ENCODE measurements at regions of chr11 and their contacts with region 1.

Region 1: DNA sequence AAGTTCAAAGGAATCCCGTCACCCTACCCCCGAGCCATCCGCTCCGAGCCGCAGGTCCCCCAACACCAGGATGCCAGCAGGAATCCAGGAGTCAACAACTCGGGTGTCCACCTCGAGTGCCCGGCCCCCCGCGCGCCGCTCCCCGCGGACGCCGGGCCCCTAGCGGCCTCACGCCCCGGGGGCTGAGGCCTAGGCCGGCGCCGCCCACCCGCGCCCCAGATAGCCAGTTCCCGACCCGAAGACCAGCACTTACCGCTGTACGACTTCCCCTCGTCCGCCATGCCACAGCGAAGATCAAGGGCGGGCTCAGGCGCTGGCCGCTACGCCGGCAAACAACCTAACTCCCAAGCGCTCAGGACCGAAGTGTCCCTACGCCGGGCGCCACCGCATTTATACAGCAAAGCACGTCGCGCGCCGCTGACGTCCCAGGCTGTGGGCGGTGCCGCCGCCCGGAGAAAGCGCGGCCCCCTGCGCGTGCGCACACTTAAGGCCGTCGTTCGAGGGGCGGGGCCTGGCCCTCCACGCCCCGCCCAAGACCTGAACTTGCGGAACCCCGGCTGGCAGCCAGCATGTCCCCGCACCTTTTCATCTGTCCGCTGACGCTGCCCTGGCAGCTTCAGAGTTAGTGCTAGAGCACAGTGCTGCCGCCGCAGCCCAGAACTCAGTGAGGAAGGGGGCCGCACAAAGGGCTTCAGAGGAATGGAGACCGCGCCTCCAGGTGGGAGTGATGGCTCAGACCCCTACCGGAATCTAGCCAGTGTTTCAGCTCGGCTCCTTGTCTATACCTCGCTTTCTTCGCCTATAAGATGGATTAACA is at the start of gene NXF1:
- DNase-seq: peak; percentile 80
- ATAC-seq: peak; percentile 89
- H3K4me3 ChIP-seq: peak within 1 kb of the TSS; percentile 85
- H3K27ac ChIP-seq: peak within 1 kb of the TSS; percentile 86
- H3K4me1 ChIP-seq: peaks cover 16% of the 10 kb centered on the region
- H3K27me3 ChIP-seq: no peaks in the 10 kb centered on the region
- CTCF ChIP-seq: peak in 1 of 3 experiments; percentile 26; a peak in 1 of 6 replicates
- EP300 ChIP-seq: 0 out of 4 replicates have a peak, but pooled peaks of 1 of the 2 experiments have one; percentile 22
- POLR2A ChIP-seq: peak; percentile 100
- RAD21 ChIP-seq: no peak
- polyA plus RNA-seq, gene NXF1: 23.4 to 37.5 TPM

Region 2: GRCh38 chr11:62816557-62816956 is 11.3 kb after region 1 on chr11:
- CTCF ChIA-PET with region 1: interaction called, 3 read pairs
- POLR2A ChIA-PET with region 1: interaction called, 17 read pairs
- RAD21 ChIA-PET with region 1: no interaction called
- SMC1A ChIA-PET with region 1: interaction called, 10 read pairs
- in situ Hi-C with region 1: no loop called
- intact Hi-C with region 1: no loop called
- DNase-seq: no peak
- ATAC-seq: no peak
- H3K4me3 ChIP-seq: no peak overlapping the region
- H3K27ac ChIP-seq: no peak overlapping the region
- H3K4me1 ChIP-seq: no peaks in the 10 kb centered on the region
- H3K27me3 ChIP-seq: no peaks in the 10 kb centered on the region
- CTCF ChIP-seq: no peak
- EP300 ChIP-seq: no peak
- POLR2A ChIP-seq: no peak
- RAD21 ChIP-seq: no peak

Region 3: DNA sequence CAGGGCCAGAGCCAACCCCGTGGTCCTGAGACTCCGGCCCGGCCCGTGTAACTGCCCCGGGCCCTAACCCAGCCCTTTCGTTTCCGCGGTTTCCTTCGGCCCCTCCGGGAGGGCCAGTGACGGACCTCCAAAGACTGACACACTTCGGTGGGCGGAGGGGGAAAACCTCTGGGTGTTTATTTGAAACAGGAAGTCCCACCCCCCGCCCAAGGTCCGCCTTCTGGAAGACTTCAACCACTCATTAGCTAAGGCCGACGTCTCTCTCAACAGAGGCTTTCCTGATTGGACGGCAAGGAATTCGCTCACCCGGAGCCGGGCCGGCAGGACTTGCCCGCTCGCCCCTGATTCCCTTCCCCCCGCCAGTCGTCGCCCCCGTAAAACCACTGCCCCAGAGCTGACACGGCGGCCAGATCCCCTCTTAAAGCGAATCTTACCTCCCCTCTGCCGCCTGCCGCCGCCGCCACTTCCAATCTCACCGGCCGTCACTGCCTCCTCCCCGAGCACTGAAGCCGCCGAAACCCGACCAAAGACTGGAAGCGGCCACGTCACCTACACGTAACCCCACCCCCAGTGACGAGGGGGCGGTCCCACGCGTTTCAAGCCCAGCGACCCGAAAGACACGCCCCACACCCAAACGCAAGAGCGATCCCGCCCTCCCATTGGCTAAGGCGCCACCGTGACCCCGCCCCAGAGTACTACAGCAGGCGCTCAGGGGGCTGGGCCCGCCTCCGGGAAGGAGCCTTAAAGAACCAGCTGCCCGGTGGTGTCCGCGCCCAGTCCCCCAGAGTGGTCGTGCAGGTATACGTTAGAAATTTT is 26.4 kb after region 1 on chr11 and contains the start of gene STX5:
- CTCF ChIA-PET with region 1: interaction called, 3 read pairs
- POLR2A ChIA-PET with region 1: interaction called, 11 read pairs
- RAD21 ChIA-PET with region 1: interaction called, 9 read pairs
- SMC1A ChIA-PET with region 1: interaction called, 5 read pairs
- in situ Hi-C with region 1: no loop called
- intact Hi-C with region 1: no loop called
- DNase-seq: peak; percentile 93
- ATAC-seq: peak; percentile 93
- H3K4me3 ChIP-seq: peak within 1 kb of the TSS; percentile 99
- H3K27ac ChIP-seq: peak within 1 kb of the TSS; percentile 84
- H3K4me1 ChIP-seq: peaks cover 8% of the 10 kb centered on the region
- H3K27me3 ChIP-seq: no peaks in the 10 kb centered on the region
- CTCF ChIP-seq: no peak
- EP300 ChIP-seq: 0 out of 4 replicates have a peak, but pooled peaks of 1 of the 2 experiments have one; percentile 16
- POLR2A ChIP-seq: peak; percentile 88
- RAD21 ChIP-seq: no peak
- polyA plus RNA-seq, gene STX5: 3.8 to 4.5 TPM

Region 4: DNA sequence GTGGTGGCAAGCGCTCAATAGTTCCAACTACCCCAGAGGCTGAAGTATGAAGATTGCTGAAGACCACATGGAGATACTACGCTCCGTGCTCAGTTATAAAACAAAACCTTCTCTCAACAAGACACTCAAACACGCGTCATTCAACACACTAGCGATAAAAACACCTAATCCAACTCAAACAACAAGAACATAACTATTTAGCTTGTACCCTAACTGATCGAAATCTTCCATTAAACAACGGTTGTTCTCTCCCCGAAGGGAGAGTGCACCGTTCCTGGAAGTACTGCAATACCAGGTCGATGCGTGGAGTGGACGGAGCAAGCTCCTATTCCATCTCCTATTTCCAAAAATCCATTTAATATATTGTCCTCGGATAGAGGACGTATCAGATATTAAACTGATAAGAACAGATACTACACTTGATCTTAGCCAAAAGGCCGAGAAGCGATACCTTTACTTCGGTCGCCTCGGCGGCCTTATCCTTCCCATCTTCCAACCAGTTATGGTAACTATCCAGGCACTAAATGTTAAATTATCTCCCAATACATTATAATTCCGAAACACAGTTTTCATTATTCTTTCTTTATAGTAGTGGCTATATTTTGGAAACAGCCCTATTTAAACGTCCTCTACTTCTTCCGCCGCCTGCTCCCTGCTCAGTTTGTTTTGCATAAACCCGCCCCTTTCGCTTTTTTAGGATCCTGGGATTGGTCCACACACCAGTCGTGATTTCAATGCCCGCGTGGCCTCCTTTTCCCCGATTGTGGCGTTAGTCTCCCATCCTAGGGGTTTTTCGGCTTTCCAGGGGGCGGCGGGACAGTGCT is 36.3 kb after region 1 on chr11:
- CTCF ChIA-PET with region 1: interaction called, 4 read pairs
- POLR2A ChIA-PET with region 1: interaction called, 15 read pairs
- RAD21 ChIA-PET with region 1: interaction called, 7 read pairs
- SMC1A ChIA-PET with region 1: interaction called, 4 read pairs
- in situ Hi-C with region 1: no loop called
- intact Hi-C with region 1: no loop called
- DNase-seq: peak; percentile 100
- ATAC-seq: peak; percentile 83
- H3K4me3 ChIP-seq: peak overlapping the region; percentile 68; the same call in 1 of the 2 replicates
- H3K27ac ChIP-seq: peak overlapping the region; percentile 99
- H3K4me1 ChIP-seq: peaks cover 7% of the 10 kb centered on the region
- H3K27me3 ChIP-seq: no peaks in the 10 kb centered on the region
- CTCF ChIP-seq: peak in 1 of 3 experiments; percentile 21; a peak in 1 of 6 replicates
- EP300 ChIP-seq: peak in 1 of 2 experiments; percentile 72; a peak in 1 of 4 replicates
- POLR2A ChIP-seq: peak; percentile 92
- RAD21 ChIP-seq: no peak

Region 5: GRCh38 chr11:63023841-63024648 is 218.8 kb after region 1 on chr11:
- CTCF ChIA-PET with region 1: no interaction called
- POLR2A ChIA-PET with region 1: no interaction called
- RAD21 ChIA-PET with region 1: no interaction called
- SMC1A ChIA-PET with region 1: no interaction called
- in situ Hi-C with region 1: no loop called
- intact Hi-C with region 1: no loop called
- DNase-seq: no peak
- ATAC-seq: peak; percentile 97
- H3K4me3 ChIP-seq: no peak overlapping the region
- H3K27ac ChIP-seq: no peak overlapping the region
- H3K4me1 ChIP-seq: peaks cover 3% of the 10 kb centered on the region; the same call in 1 of the 2 replicates
- H3K27me3 ChIP-seq: no peaks in the 10 kb centered on the region
- CTCF ChIP-seq: peak; percentile 98 to 100 (median 99)
- EP300 ChIP-seq: no peak
- POLR2A ChIP-seq: no peak
- RAD21 ChIP-seq: peak; percentile 90